ENCODE measurements at regions of chr18 and their contacts with region 1.

Region 1: DNA sequence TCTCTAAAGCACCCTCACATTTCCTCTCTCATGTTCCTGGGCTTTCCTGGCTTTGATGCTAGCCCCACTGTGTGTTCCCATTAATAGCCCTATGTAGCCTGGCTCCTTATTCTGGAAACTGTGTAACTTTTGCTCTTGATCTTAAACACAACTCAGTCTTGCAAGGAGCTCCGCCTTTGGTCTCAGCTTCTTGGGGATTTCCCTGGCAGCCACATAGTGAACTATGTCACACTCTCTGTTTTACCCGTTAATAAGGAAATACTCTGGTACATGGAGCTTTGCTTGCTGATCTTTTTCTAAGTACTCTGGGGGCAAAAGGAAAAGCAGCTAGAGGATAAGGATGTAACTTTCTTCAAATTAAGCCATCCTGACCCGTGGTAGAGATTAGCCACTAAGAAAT is 259.3 kb downstream of the NEDD4L start:
- DNase-seq: no peak
- ATAC-seq: no peak
- H3K4me3 ChIP-seq: no peak overlapping the region
- H3K27ac ChIP-seq: no peak overlapping the region
- H3K4me1 ChIP-seq: peaks cover 0 to 64% (median 13%) of the 10 kb centered on the region in 12 donors
- H3K27me3 ChIP-seq: no peaks in the 10 kb centered on the region
- CTCF ChIP-seq: no peak
- POLR2A ChIP-seq: no peak

Region 2: GRCh38 chr18:58257461-58257860 is 45.9 kb before region 1 on chr18:
- intact Hi-C with region 1: loop called in 2 of 10 experiments (anchors 5 to 10 kb)
- DNase-seq: no peak
- ATAC-seq: peak; percentile 8 to 24 (median 15)
- H3K4me3 ChIP-seq: peak overlapping the region; percentile 27 to 61 (median 53)
- H3K27ac ChIP-seq: peak overlapping the region; percentile 62 to 87 (median 80)
- H3K4me1 ChIP-seq: peaks cover 0 to 20% (median 0%) of the 10 kb centered on the region in 12 donors
- H3K27me3 ChIP-seq: no peaks in the 10 kb centered on the region
- CTCF ChIP-seq: no peak
- POLR2A ChIP-seq: no peak

Region 3: GRCh38 chr18:58263055-58263957 is 40.1 kb before region 1 on chr18:
- intact Hi-C with region 1: loop called in 2 of 10 experiments (anchors 5 to 10 kb)
- DNase-seq: no peak
- ATAC-seq: peak; percentile 56 to 78 (median 66)
- H3K4me3 ChIP-seq: peak overlapping the region in 3 of 12 donors; percentile 13 to 16 (median 15)
- H3K27ac ChIP-seq: peak overlapping the region in 11 of 12 donors; percentile 22 to 74 (median 63)
- H3K4me1 ChIP-seq: peaks cover 0 to 42% (median 6%) of the 10 kb centered on the region in 12 donors
- H3K27me3 ChIP-seq: no peaks in the 10 kb centered on the region
- CTCF ChIP-seq: no peak
- POLR2A ChIP-seq: no peak